B cell (primary cell): ENCODE measurements at regions of chr12 and their contacts with region 1.

Region 1: DNA sequence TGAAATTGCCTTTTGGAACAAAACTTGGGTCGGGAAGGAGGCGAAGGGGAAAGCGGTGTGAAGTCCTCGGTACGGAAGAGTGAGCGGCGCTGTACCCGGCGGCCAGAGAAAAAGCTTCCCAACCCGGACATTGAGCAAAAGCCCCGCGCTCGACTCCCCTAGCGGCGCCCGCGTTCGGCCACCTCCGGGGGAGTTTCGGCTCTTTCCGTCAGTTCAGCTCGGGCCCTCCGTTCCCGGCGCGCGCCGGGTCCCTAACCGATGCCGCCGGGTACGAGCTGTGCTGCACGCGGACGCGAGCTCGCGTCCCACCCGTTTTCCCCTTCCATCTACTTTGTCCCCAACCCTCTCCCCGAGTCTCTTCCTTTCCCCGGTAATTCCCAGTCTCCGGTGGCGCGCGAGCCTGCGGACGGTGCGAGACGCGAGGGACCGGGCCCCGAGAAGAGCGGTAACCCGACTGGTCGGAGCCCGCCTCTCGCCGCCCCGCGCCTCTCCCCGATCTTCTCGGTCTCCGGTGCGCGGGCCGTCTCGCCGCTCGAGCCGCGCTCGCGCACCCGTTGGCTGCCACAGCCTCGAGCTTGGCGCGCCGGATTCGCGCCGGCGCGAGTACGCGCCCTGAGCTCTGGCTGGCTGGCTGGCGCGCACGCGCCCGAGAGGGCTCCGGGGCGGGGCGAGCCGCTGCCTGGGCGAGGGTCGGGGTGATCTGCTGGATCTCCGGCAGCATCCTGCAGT is 446 bp upstream of the SPATS2 start:
- DNase-seq: peak; percentile 90
- ATAC-seq: peak; percentile 78
- H3K4me3 ChIP-seq: peak overlapping the region; percentile 61 to 96 (median 80)
- H3K4me3 Mint-ChIP-seq: peak overlapping the region; percentile 87
- H3K27ac ChIP-seq: peak overlapping the region; percentile 90 to 91
- H3K27ac Mint-ChIP-seq: peak overlapping the region; percentile 98
- H3K4me1 ChIP-seq: peaks cover 33 to 39% of the 10 kb centered on the region in 2 donors
- H3K4me1 Mint-ChIP-seq: peaks cover 46% of the 10 kb centered on the region
- H3K27me3 ChIP-seq: no peaks in the 10 kb centered on the region
- H3K27me3 Mint-ChIP-seq: no peaks in the 10 kb centered on the region
- CTCF ChIP-seq: peak; percentile 44

Region 2: DNA sequence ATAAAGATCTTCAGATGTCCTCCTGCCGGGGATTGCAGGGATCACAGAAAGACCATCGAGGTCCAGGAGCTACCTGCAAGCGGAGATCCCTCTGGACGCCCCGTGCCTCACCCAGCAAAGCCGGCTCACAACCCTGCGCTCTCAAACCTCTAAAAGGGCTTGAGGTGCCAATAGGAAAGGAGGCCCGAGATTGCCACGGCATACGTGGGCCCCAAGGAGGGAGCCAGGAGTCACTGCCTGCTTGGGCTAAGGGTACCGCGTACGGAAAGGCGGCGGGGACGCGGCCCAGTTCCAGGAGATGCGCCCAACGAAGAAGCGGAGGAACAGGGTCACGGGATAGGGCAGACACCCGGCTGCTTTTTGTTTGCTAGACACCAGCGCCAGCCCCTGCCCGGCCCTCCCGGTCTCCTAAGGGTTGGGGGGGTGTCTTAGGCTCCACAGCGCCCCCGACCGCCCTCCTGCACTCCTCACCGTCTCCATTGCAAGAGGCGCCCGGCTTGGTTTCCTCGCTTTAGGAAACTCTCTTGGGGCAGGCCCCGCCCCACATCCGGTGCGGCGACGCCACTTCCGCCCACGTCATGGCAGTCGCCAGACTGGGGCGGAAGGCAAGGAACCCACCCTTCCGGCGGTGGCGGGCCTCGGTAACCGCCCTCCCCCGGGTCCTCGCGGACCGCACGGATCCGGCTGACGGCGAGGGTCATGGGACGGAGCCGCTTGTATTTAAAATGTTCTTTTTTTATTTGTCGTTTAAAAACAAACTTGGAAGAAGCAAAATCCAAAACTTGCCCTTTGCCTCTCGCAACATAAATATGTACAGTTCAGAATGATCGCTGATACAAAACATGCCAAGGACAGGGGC is 348.3 kb before region 1 on chr12 and contains the start of gene PRKAG1:
- CTCF ChIA-PET with region 1: no interaction called
- POLR2A ChIA-PET with region 1: no interaction called
- intact Hi-C with region 1: loop called (anchors 2 kb)
- DNase-seq: peak; percentile 98
- ATAC-seq: peak; percentile 88
- H3K4me3 ChIP-seq: peak within 1 kb of the TSS; percentile 79 to 88 (median 86)
- H3K4me3 Mint-ChIP-seq: peak within 1 kb of the TSS; percentile 91
- H3K27ac ChIP-seq: peak within 1 kb of the TSS; percentile 95 to 99
- H3K27ac Mint-ChIP-seq: peak within 1 kb of the TSS; percentile 98
- H3K4me1 ChIP-seq: peaks cover 18 to 21% of the 10 kb centered on the region in 2 donors
- H3K4me1 Mint-ChIP-seq: peaks cover 29% of the 10 kb centered on the region
- H3K27me3 ChIP-seq: no peaks in the 10 kb centered on the region
- H3K27me3 Mint-ChIP-seq: no peaks in the 10 kb centered on the region
- CTCF ChIP-seq: peak; percentile 74
- total RNA-seq, gene PRKAG1: 58.6 and 60.0 TPM in 2 replicates

Region 3: DNA sequence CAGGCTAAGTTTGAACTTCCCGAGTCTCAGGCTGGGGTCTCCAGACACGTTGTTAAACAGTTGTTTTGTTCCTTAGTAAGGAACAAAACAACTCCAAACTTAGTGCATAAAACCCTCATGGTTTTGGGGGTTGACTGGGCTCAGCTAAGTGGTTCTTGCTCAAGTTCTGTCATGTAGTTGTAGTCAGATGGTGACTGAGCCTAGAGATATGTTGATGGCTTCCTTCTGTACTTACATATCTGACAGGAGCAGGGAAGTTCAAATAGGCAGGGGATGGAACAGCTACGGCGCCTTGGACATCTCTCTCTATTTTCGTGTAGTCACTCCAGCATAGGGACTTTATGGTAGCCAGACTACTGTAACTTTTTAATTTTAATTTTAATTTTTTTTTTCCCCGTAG is 46.2 kb after region 1 on chr12:
- CTCF ChIA-PET with region 1: no interaction called
- POLR2A ChIA-PET with region 1: no interaction called
- intact Hi-C with region 1: no loop called
- DNase-seq: no peak
- ATAC-seq: no peak
- H3K4me3 ChIP-seq: no peak overlapping the region
- H3K4me3 Mint-ChIP-seq: no peak overlapping the region
- H3K27ac ChIP-seq: no peak overlapping the region
- H3K27ac Mint-ChIP-seq: no peak overlapping the region
- H3K4me1 ChIP-seq: no peaks in the 10 kb centered on the region
- H3K4me1 Mint-ChIP-seq: peaks cover 8% of the 10 kb centered on the region
- H3K27me3 ChIP-seq: no peaks in the 10 kb centered on the region
- H3K27me3 Mint-ChIP-seq: no peaks in the 10 kb centered on the region
- CTCF ChIP-seq: no peak

Region 4: GRCh38 chr12:49428793-49429192 is 62.0 kb after region 1 on chr12:
- CTCF ChIA-PET with region 1: interaction called, 9 read pairs
- POLR2A ChIA-PET with region 1: interaction called, 9 read pairs
- intact Hi-C with region 1: loop called (anchors 5 kb)
- DNase-seq: peak; percentile 44
- ATAC-seq: no peak
- H3K4me3 ChIP-seq: peak overlapping the region in 2 of 5 experiments; percentile 8 to 42
- H3K4me3 Mint-ChIP-seq: peak overlapping the region; percentile 52
- H3K27ac ChIP-seq: peak overlapping the region; percentile 62 to 82
- H3K27ac Mint-ChIP-seq: peak overlapping the region; percentile 76
- H3K4me1 ChIP-seq: peaks cover 5 to 9% of the 10 kb centered on the region in 2 donors
- H3K4me1 Mint-ChIP-seq: peaks cover 23% of the 10 kb centered on the region
- H3K27me3 ChIP-seq: no peaks in the 10 kb centered on the region
- H3K27me3 Mint-ChIP-seq: no peaks in the 10 kb centered on the region
- CTCF ChIP-seq: no peak